ENCODE measurements at regions of chr14 and their contacts with region 1.

Region 1: GRCh38 chr14:70821584-70822529 is 12.5 kb upstream of the MAP3K9 start:
- DNase-seq: peak in 34 of 35 experiments; percentile 8 to 63 (median 34)
- ATAC-seq: peak; percentile 51 to 60 (median 56)
- H3K4me3 ChIP-seq: peak overlapping the region; percentile 59 to 69
- H3K4me3 Mint-ChIP-seq: peak overlapping the region; percentile 77 to 84 (median 80)
- H3K27ac ChIP-seq: no peak overlapping the region
- H3K27ac Mint-ChIP-seq: no peak overlapping the region
- H3K4me1 ChIP-seq: peaks cover 2 to 24% of the 10 kb centered on the region in 2 experiments
- H3K4me1 Mint-ChIP-seq: peaks cover 16 to 17% (median 16%) of the 10 kb centered on the region in 3 donors
- H3K27me3 ChIP-seq: peaks cover 2 to 23% of the 10 kb centered on the region in 2 experiments
- H3K27me3 Mint-ChIP-seq: peaks cover 18 to 19% of the 10 kb centered on the region in 2 donors

Region 2: DNA sequence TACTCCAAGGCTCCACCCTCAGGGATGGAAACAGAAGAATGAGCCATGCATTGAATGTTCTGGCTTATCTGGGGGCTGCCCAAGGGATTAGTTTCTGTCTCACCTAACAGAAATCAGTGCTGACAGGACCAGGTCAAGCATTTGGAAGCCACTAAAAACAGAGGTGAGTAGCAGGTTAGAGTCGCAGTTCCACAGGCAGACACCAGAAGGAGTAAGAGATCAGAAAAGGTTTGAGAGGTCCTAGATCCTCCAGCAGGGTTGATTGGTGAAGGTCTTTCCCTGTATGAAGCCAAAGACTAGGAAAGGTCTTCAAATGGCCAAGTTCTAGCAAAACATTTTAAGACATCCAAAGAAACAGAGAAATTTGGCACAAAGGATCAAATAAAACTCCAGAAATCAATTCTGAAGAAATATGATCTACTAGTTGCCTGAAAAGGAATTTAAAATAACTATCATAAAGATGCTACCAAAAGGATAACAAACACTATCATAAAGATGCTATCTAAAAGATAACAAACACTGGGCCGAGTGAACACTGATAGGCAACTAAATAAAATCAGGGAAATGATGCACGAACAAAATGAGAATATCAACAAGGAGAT is 199.6 kb before region 1 on chr14:
- CTCF ChIA-PET with region 1: interaction called, 5 to 10 read pairs
- POLR2A ChIA-PET with region 1: no interaction called
- DNase-seq: peak in 29 of 35 experiments; percentile 6 to 75 (median 42)
- ATAC-seq: peak; percentile 77 to 81 (median 79)
- H3K4me3 ChIP-seq: no peak overlapping the region
- H3K4me3 Mint-ChIP-seq: no peak overlapping the region
- H3K27ac ChIP-seq: no peak overlapping the region
- H3K27ac Mint-ChIP-seq: no peak overlapping the region
- H3K4me1 ChIP-seq: no peaks in the 10 kb centered on the region
- H3K4me1 Mint-ChIP-seq: peaks cover 0 to 8% (median 2%) of the 10 kb centered on the region in 3 donors
- H3K27me3 ChIP-seq: no peaks in the 10 kb centered on the region
- H3K27me3 Mint-ChIP-seq: peaks cover 0 to 6% of the 10 kb centered on the region in 2 donors

Region 3: GRCh38 chr14:70803321-70804310 is 18.2 kb before region 1 on chr14:
- CTCF ChIA-PET with region 1: interaction called, 7 to 58 read pairs
- POLR2A ChIA-PET with region 1: interaction called in 1 of 2 experiments, 4 read pairs
- DNase-seq: no peak
- ATAC-seq: no peak
- H3K4me3 ChIP-seq: no peak overlapping the region
- H3K4me3 Mint-ChIP-seq: no peak overlapping the region
- H3K27ac ChIP-seq: no peak overlapping the region
- H3K27ac Mint-ChIP-seq: no peak overlapping the region
- H3K4me1 ChIP-seq: peaks cover 3 to 9% of the 10 kb centered on the region in 2 experiments
- H3K4me1 Mint-ChIP-seq: peaks cover 9 to 14% (median 10%) of the 10 kb centered on the region in 3 donors
- H3K27me3 ChIP-seq: peaks cover 0 to 3% of the 10 kb centered on the region in 2 experiments
- H3K27me3 Mint-ChIP-seq: peaks cover 0 to 5% of the 10 kb centered on the region in 2 donors

Region 4: DNA sequence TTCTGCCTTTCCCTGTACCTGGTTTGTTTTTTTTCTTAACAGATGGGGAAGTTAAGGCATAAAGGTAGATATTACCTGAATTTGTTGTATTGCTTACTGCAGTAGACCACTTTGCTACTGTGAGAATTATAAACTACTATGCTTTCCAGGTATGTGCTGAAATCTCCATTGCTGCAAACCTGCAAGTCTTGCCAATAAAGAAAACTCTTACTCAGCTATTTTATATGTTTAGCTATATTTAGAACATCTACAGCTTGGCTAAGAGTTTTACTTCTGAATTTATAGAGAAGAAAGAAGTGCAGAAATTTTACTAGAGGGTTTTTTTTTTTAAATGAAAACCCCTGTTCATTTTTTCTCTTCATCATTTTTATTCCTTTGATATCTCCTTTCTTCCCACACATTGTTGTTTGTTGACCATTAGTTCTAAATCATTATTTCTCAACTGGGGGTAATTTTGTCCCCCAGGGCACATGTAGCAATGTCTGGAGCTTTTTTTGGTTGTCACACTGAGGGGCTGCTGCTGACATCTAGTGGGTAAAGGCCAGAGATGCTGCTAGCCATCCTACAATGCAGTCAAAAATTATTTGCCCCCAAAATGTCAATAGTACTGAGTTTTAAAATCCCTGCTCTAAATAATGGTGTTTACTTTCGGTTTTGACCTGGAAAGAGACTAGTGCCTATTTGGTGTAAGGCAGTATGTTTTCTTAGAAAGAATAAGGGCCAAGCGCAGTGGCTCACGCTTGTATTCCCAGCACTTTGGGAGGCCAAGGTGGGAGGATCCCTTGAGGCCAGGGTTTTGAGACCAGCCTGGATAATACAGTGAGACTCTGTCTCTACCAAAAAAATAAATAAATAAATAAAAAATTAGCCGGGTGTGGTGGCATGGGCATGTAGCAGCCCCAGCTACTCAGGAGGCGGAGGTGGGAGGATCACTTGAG is 134.0 kb after region 1 on chr14:
- CTCF ChIA-PET with region 1: interaction called, 4 to 52 read pairs
- POLR2A ChIA-PET with region 1: no interaction called
- DNase-seq: peak; percentile 18 to 76 (median 45)
- ATAC-seq: peak; percentile 72 to 94 (median 79)
- H3K4me3 ChIP-seq: no peak overlapping the region
- H3K4me3 Mint-ChIP-seq: no peak overlapping the region
- H3K27ac ChIP-seq: no peak overlapping the region
- H3K27ac Mint-ChIP-seq: peak overlapping the region; percentile 54 to 74
- H3K4me1 ChIP-seq: peaks cover 0 to 10% of the 10 kb centered on the region in 2 experiments
- H3K4me1 Mint-ChIP-seq: peaks cover 41 to 47% (median 44%) of the 10 kb centered on the region in 3 donors
- H3K27me3 ChIP-seq: no peaks in the 10 kb centered on the region
- H3K27me3 Mint-ChIP-seq: no peaks in the 10 kb centered on the region

Region 5: GRCh38 chr14:70981000-70981952 is 159.4 kb after region 1 on chr14:
- CTCF ChIA-PET with region 1: interaction called, 4 to 14 read pairs
- POLR2A ChIA-PET with region 1: no interaction called
- DNase-seq: peak in 1 of 35 experiments; percentile 29
- ATAC-seq: peak; percentile 40 to 71 (median 65)
- H3K4me3 ChIP-seq: no peak overlapping the region
- H3K4me3 Mint-ChIP-seq: peak overlapping the region; percentile 52 to 63 (median 53)
- H3K27ac ChIP-seq: peak overlapping the region; percentile 74
- H3K27ac Mint-ChIP-seq: peak overlapping the region; percentile 83 to 87
- H3K4me1 ChIP-seq: peaks cover 7 to 19% of the 10 kb centered on the region in 2 experiments
- H3K4me1 Mint-ChIP-seq: peaks cover 58 to 70% (median 69%) of the 10 kb centered on the region in 3 donors
- H3K27me3 ChIP-seq: no peaks in the 10 kb centered on the region
- H3K27me3 Mint-ChIP-seq: no peaks in the 10 kb centered on the region

Measured in T-cell (primary cell).